Activated naive CD4-positive, alpha-beta T cell treated with anti-CD3 and anti-CD28 coated beads for 36 hours (primary cell): ENCODE measurements at regions of chr5 and their contacts with region 1.

Region 1: GRCh38 chr5:176660860-176661641 is 13.8 kb downstream of the TSPAN17 start:
- DNase-seq: peak; percentile 82
- H3K4me3 Mint-ChIP-seq: no peak overlapping the region
- H3K27ac Mint-ChIP-seq: no peak overlapping the region
- H3K4me1 Mint-ChIP-seq: peaks cover 24% of the 10 kb centered on the region
- H3K27me3 Mint-ChIP-seq: peaks cover 8% of the 10 kb centered on the region

Region 2: DNA sequence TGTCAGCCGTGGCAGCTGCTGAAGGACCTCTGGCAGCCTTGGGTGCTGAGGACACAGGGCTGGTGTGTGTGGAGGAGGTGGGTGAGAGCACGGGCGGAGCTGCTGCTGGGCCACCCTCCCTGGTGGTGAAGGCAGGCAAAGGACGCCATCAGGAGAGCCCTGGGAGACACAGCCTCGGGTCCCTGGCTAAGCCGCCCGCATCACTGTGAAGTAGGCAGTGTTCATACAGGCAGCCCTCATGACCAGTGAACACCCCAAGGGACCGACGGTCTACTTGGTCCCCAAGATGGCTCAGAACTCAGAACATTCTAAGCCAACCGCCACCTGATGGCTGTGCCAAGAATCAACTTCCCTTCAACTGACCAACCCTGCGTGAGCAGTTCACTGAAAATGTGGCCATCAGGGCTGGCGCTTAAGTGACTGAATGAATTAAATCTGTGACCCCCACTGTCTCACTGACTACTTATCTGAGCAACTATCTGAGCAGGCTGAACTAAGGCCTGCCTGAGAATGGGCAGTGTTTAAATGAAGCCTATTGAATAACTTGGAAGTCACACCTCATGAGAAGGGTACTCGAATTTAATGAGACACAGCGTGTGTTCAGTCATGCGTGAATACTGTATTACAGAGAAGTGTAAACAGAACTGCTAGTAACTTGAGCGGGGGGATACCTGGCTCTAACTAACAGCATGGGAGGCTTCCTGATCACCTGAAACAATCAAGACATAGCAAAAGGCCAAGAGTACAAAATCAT is 477.6 kb before region 1 on chr5:
- CTCF ChIA-PET with region 1: no interaction called
- intact Hi-C with region 1: no loop called
- DNase-seq: no peak
- H3K4me3 Mint-ChIP-seq: no peak overlapping the region
- H3K27ac Mint-ChIP-seq: no peak overlapping the region
- H3K4me1 Mint-ChIP-seq: no peaks in the 10 kb centered on the region
- H3K27me3 Mint-ChIP-seq: peaks cover 3% of the 10 kb centered on the region

Region 3: DNA sequence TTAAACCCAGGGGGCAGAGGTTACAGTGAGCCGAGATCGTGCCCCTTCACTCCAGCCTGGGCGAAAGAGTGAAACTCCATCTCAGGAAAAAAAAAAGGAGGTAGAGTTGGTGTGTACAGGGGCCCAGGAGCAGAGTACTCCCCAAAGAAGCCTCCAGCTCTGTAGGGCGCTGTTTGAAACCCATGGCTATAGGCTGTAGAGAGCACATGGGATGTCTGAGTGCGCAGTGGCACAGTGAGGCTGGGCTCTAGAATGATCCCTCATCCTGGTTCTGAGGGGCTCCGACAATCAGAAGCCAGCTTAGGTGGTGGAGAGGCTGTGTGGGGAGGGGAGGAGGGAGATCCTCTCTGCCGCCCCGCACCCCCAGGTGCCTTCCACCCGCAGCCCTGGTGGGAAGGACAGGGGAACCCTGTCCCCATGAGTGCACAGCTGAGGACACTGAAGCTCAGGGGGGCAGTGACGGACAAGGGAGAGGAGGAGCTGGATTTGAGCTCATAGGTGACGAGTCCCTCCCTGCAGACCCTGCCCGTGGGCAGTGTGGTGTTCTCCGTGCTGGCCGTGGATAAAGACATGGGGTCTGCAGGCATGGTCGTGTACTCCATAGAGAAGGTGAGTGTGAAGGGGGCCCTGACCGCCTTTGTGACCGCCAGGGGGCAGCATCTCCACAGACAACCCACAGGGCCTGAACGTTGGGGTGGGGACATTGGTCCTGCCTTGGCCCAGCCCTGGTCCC is 87.3 kb before region 1 on chr5:
- CTCF ChIA-PET with region 1: interaction called, 19 read pairs
- intact Hi-C with region 1: no loop called
- DNase-seq: peak; percentile 81
- H3K4me3 Mint-ChIP-seq: no peak overlapping the region
- H3K27ac Mint-ChIP-seq: no peak overlapping the region
- H3K4me1 Mint-ChIP-seq: peaks cover 3% of the 10 kb centered on the region
- H3K27me3 Mint-ChIP-seq: no peaks in the 10 kb centered on the region

Region 4: DNA sequence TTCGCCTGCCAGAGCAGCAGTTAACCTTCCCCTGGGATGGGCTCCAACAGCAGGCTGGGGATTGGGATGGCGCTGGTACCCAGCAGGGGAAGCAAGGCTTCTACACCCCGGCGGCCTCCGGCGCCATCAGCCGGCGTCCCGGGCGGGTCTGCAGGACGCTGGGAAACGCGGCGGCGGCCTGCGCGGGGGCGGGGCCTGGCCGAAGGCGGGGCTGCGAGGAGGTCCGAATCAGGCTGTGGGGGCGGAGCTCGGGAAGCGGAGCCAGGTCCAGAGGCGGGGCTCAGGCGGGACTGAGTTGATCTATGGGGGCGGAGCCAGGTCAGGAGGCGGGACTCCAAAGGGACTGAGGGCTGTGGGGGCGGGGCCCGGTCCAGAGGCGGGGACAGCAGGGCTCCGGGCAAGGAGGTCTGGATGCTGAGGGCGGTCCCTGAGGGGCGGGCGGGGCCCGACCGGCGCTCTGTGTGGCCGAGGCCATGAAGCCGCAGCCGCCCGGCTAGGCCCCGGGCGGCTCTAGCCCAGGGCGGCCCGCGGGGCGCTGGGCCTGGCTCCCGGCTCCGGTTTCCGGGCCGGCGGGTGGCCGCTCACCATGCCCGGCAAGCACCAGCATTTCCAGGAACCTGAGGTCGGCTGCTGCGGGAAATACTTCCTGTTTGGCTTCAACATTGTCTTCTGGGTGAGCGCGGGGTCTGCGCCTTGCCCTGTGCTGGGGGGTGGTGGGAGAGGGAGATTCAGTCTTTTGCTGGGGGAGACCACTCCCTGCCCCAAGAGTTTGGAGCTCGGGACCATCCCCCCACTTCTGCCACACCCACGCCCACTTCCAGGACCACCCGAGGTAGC is 13.8 kb before region 1 on chr5 and contains the start of gene TSPAN17:
- CTCF ChIA-PET with region 1: interaction called, 69 read pairs
- intact Hi-C with region 1: no loop called
- DNase-seq: peak; percentile 100
- H3K4me3 Mint-ChIP-seq: peak within 1 kb of the TSS; percentile 86
- H3K27ac Mint-ChIP-seq: peak within 1 kb of the TSS; percentile 86
- H3K4me1 Mint-ChIP-seq: peaks cover 44% of the 10 kb centered on the region
- H3K27me3 Mint-ChIP-seq: no peaks in the 10 kb centered on the region
- total RNA-seq, gene TSPAN17: 17.2 to 17.4 TPM

Region 5: DNA sequence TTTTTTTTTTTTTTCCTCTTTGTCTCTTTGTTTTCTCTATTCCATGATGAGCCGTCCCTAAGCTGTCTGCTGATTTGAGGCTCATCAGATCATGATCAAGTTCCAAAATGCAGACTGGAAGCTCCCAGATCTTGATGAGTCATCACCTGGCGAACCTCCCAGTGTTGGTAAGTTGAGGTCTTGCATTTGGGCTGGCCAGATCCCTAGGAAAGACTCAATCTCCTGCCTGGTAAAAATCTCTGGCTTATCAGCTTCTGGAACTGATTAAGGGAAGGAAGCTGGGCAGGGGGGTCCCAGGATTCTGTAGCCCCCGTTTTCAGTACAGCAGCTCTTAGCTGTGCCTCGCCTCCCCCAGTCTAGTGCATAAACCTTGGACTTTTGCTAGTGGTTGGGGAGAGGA is 55.3 kb after region 1 on chr5:
- CTCF ChIA-PET with region 1: interaction called, 10 read pairs
- intact Hi-C with region 1: no loop called
- DNase-seq: no peak
- H3K4me3 Mint-ChIP-seq: no peak overlapping the region
- H3K27ac Mint-ChIP-seq: no peak overlapping the region
- H3K4me1 Mint-ChIP-seq: no peaks in the 10 kb centered on the region
- H3K27me3 Mint-ChIP-seq: peaks cover 20% of the 10 kb centered on the region

Region 6: GRCh38 chr5:176810084-176810597 is 149.1 kb after region 1 on chr5 and contains the start of gene UNC5A:
- CTCF ChIA-PET with region 1: interaction called, 11 read pairs
- intact Hi-C with region 1: loop called (anchors 5 kb)
- DNase-seq: peak; percentile 62
- H3K4me3 Mint-ChIP-seq: peak within 1 kb of the TSS; percentile 59
- H3K27ac Mint-ChIP-seq: no peak within 1 kb of the TSS
- H3K4me1 Mint-ChIP-seq: peaks cover 11% of the 10 kb centered on the region
- H3K27me3 Mint-ChIP-seq: peaks cover 64% of the 10 kb centered on the region
- total RNA-seq, gene UNC5A: not detected

Region 7: GRCh38 chr5:176901260-176902101 is 240.4 kb after region 1 on chr5:
- CTCF ChIA-PET with region 1: interaction called, 8 read pairs
- intact Hi-C with region 1: loop called (anchors 5 kb)
- DNase-seq: peak; percentile 42
- H3K4me3 Mint-ChIP-seq: no peak overlapping the region
- H3K27ac Mint-ChIP-seq: peak overlapping the region; percentile 81
- H3K4me1 Mint-ChIP-seq: peaks cover 49% of the 10 kb centered on the region
- H3K27me3 Mint-ChIP-seq: no peaks in the 10 kb centered on the region

Region 8: DNA sequence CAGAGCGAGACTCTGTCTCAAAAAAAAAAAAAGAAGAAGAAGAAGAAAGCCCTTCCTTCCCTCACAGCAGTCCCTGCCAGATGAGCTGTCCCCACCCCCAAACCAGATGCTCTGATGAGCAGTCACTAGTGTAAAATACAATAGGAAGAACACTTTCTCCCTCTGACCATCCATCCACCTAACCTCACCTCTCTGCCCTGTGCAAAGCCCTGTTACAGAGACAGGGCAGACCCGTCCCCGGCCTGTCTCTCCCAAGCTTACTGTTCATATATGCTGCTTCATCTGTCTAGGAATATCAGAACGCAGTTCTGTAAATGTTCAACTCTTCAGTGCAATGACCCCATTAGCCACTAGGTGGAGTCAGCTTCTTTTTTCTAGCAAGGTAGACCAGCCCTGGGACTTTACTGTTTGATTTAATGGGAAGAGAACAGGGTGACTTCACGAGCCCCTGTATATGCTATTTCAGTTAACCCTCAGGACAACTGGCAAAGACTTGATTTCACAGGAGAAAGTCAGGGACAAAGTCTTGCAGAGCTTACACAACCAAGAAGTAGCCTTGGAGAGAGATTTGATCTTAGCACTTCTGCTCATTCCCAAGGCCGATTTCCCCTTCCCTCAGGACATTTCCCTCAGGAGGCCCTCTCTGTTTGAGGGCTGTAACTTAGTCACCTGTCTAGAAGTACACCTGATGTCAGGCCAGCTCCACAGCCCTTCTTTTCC is 410.8 kb after region 1 on chr5:
- CTCF ChIA-PET with region 1: interaction called, 15 read pairs
- intact Hi-C with region 1: no loop called
- DNase-seq: peak; percentile 87
- H3K4me3 Mint-ChIP-seq: no peak overlapping the region
- H3K27ac Mint-ChIP-seq: no peak overlapping the region
- H3K4me1 Mint-ChIP-seq: peaks cover 3% of the 10 kb centered on the region
- H3K27me3 Mint-ChIP-seq: no peaks in the 10 kb centered on the region